Ovary (tissue), 10 donors: ENCODE measurements at regions of chr19 and their contacts with region 1.

Region 1: GRCh38 chr19:48588670-48589399 is 17.7 kb upstream of the SPACA4 start:
- DNase-seq: peak; percentile 79 to 91 (median 86)
- H3K4me3 ChIP-seq: no peak overlapping the region
- H3K27ac ChIP-seq: no peak overlapping the region
- H3K4me1 ChIP-seq: peaks cover 4% of the 10 kb centered on the region
- H3K27me3 ChIP-seq: no peaks in the 10 kb centered on the region
- CTCF ChIP-seq: peak; percentile 45 to 84 (median 78)
- EP300 ChIP-seq: no peak
- POLR2A ChIP-seq: no peak

Region 2: DNA sequence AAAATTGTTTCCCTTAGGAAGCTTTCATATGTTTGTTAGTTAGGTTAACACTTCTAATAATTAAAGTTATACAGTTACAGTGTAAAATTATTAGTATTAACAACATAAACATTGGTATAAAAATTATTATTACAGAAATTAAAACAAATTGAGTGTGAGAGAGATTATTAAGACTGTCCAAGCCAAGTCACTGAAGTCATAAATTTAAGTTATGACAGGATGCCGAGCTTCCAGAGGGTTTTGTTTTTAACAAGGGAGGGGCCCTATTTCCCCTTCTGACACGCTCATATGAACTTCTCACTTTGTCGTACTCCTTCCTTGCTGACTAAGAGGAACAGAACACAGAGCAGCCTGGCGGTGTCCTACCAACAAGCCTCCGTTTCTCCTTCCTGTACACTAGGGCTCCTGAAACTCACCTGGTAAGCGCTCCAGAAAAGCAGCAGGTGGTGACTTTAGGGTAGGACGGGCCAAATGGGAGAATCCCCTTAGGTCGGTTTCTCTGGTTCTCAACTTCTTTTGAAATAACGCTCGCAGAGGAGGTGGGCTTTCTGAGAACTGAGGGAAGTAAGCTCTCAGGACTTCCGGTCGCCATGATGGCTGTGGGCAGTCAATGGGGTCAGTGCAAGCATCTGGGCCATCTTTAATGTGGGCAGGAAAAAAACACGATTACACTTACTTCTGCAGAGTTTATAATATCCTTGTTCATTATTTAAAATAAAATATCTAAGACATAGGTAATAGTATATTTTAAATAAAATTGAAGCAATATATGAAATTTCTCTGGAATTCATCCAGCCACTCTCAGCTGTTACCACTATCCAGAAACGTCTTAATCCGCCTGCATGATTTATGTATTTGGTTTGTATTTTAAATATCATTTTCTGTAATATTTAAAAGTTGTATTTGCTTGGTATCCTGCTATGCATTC is 333.2 kb before region 1 on chr19 and contains the start of gene CARD8:
- intact Hi-C with region 1: loop called in 1 of 4 experiments (anchors 10 kb)
- DNase-seq: peak; percentile 72 to 79 (median 74)
- H3K4me3 ChIP-seq: peak within 1 kb of the TSS; percentile 76
- H3K27ac ChIP-seq: peak within 1 kb of the TSS in 1 of 2 donors; percentile 81
- H3K4me1 ChIP-seq: peaks cover 3% of the 10 kb centered on the region
- H3K27me3 ChIP-seq: no peaks in the 10 kb centered on the region
- CTCF ChIP-seq: no peak
- EP300 ChIP-seq: no peak
- POLR2A ChIP-seq: no peak
- total RNA-seq, gene CARD8: 10.0 to 36.0 (median 24.9) TPM

Region 3: GRCh38 chr19:48271531-48272151 is 317.2 kb before region 1 on chr19:
- intact Hi-C with region 1: loop called in 2 of 4 experiments (anchors 5 to 10 kb)
- DNase-seq: peak in 2 of 5 donors; percentile 35 to 45
- H3K4me3 ChIP-seq: peak overlapping the region; percentile 34
- H3K27ac ChIP-seq: no peak overlapping the region
- H3K4me1 ChIP-seq: peaks cover 3% of the 10 kb centered on the region
- H3K27me3 ChIP-seq: no peaks in the 10 kb centered on the region
- CTCF ChIP-seq: no peak
- EP300 ChIP-seq: no peak
- POLR2A ChIP-seq: no peak

Region 4: GRCh38 chr19:48308631-48309586 is 279.9 kb before region 1 on chr19:
- intact Hi-C with region 1: loop called in 1 of 4 experiments (anchors 10 kb)
- DNase-seq: no peak
- H3K4me3 ChIP-seq: no peak overlapping the region
- H3K27ac ChIP-seq: no peak overlapping the region
- H3K4me1 ChIP-seq: no peaks in the 10 kb centered on the region
- H3K27me3 ChIP-seq: no peaks in the 10 kb centered on the region
- CTCF ChIP-seq: no peak
- EP300 ChIP-seq: no peak
- POLR2A ChIP-seq: no peak

Region 5: DNA sequence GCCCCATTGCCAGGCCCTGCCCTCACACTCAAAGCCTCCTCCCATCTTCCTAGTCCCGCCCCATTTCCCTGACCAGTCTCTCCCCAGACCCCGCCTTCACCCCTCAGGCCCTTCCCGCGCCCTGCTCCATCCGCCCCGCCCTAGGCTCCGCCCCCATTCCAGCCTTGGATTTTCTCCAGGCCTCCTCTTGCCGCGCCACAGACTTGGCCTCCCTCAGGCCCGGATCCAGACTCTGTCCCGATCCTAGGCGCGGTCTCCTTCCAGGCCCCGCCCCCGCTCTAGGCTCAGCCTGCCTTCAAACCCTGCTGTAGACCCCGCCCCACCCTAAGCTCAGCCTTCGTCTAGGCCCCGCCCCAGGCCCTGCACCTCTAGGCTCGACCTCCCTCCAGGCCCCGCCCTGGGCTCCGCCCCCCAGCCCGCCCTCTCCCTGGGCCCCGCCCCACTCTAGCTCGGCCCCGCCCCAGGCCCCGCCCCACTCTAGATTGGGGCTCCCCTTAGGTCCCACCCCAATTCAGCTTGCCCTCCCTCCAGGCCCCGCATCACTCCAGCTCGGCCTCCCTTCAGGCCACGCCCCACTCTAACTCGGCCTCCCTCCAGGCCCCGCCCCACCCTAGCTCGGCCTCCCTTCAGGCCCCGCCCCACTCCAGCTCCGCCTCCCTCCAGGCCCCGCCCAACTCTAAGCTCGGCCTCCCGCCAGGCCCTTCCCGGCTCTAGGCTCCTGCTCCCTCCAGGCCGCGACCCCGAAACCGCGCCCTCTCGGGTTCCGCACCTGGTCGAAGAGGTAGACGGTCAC is 95.7 kb before region 1 on chr19:
- intact Hi-C with region 1: loop called (anchors 5 to 10 kb)
- DNase-seq: peak; percentile 95 to 98 (median 95)
- H3K4me3 ChIP-seq: peak overlapping the region; percentile 39
- H3K27ac ChIP-seq: peak overlapping the region in 1 of 2 donors; percentile 68
- H3K4me1 ChIP-seq: peaks cover 12% of the 10 kb centered on the region
- H3K27me3 ChIP-seq: no peaks in the 10 kb centered on the region
- CTCF ChIP-seq: no peak
- EP300 ChIP-seq: no peak
- POLR2A ChIP-seq: peak; percentile 76

Region 6: DNA sequence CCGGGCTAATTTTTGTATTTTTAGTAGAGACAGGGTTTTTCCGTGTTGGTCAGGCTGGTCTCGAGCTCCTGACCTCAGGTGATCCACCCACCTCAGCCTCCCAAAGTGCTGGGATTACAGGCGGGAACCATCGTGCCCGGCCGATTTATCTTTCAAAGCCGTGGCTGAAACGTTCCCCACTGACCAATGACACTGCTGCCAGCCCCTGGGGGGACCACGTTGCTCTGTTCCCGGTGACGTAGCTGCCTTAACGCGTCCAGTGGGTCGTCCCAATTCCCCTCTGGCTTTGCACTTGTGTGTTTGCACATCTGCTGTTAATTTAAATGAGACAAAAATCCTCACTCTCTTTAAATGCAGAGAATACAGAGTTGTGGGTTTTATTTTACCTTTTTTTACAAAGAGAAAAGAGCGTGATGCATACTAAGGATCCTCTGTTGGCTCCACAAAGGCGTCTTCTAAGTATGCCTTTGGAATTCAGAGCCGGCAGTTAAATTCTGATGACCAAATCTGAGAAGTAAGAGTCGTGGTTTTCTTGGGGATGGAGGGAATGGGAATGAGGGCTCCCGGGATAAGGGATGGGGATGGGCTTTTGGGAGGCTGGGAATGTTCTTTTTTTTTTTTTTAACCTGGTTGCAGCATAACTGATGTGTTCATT is 58.6 kb before region 1 on chr19:
- intact Hi-C with region 1: no loop called
- DNase-seq: no peak
- H3K4me3 ChIP-seq: no peak overlapping the region
- H3K27ac ChIP-seq: no peak overlapping the region
- H3K4me1 ChIP-seq: no peaks in the 10 kb centered on the region
- H3K27me3 ChIP-seq: no peaks in the 10 kb centered on the region
- CTCF ChIP-seq: no peak
- EP300 ChIP-seq: no peak
- POLR2A ChIP-seq: no peak

Region 7: GRCh38 chr19:48618916-48619691 is 30.3 kb after region 1 on chr19 and contains the starts of genes RPL18 and SPHK2:
- intact Hi-C with region 1: no loop called
- DNase-seq: peak; percentile 96 to 98 (median 98)
- H3K4me3 ChIP-seq: peak within 1 kb of the TSS; percentile 74
- H3K27ac ChIP-seq: peak within 1 kb of the TSS; percentile 54 to 91
- H3K4me1 ChIP-seq: peaks cover 7% of the 10 kb centered on the region
- H3K27me3 ChIP-seq: no peaks in the 10 kb centered on the region
- CTCF ChIP-seq: peak in 2 of 3 donors; percentile 33
- EP300 ChIP-seq: peak; percentile 70
- POLR2A ChIP-seq: peak; percentile 91
- total RNA-seq, gene RPL18: 2,699 to 8,435 (median 3,584) TPM
- total RNA-seq, gene SPHK2: 12.3 to 37.2 (median 27.0) TPM